PC-3 (cell line): ENCODE measurements at regions of chr7 and their contacts with region 1.

Region 1: DNA sequence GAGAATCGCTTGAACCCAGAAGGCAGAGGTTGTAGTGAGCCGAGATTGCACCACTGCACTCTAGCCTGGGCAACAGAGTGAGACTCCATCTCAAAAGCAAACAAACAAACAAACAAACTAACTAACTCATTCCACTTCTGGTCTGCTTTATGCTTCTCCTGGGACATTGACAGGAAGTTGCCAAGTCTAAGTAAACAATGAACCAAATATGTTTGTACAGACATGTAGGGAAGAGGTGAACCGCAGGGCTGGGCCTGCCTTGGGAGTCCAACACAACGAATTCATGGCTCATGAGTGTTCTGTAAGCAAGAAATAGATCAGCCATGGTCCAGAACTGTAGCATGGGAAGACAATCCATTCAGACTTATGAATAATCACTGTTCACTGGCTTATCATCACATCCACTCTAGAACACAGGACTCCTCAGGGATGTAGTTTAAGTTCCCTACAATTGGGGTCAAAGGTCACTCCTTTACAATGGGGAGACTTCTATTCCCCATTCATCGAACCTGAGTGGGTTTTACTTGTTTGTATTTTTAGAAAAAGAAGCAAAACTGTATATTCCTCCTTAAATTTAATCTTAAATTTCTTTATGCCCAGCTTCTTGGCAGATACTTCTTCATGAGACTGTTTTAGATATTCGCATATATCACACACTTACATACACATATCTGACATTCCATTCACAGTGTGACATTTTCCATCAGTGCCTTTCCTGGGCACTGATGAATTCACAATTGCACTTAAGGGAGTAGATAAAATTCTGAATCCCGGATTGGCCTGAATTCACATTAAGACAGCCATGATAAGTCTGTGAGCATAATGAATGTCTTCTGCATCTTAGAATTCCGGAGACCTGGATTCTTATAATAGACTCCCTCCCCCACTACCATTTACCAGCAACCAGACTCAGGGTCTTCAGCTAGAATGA is 159.1 kb upstream of the EEPD1 start:
- DNase-seq: peak; percentile 94
- ATAC-seq: peak; percentile 75
- H3K4me3 ChIP-seq: no peak overlapping the region
- H3K27ac ChIP-seq: peak overlapping the region; percentile 87
- H3K4me1 ChIP-seq: peaks cover 29% of the 10 kb centered on the region
- H3K27me3 ChIP-seq: no peaks in the 10 kb centered on the region
- CTCF ChIP-seq: no peak

Region 2: GRCh38 chr7:36037121-36037662 is 43.3 kb after region 1 on chr7:
- CTCF ChIA-PET with region 1: no interaction called
- POLR2A ChIA-PET with region 1: no interaction called
- intact Hi-C with region 1: loop called (anchors 1 kb)
- DNase-seq: peak; percentile 99
- ATAC-seq: peak; percentile 68
- H3K4me3 ChIP-seq: peak overlapping the region; percentile 39
- H3K27ac ChIP-seq: peak overlapping the region; percentile 100
- H3K4me1 ChIP-seq: peaks cover 69% of the 10 kb centered on the region
- H3K27me3 ChIP-seq: no peaks in the 10 kb centered on the region
- CTCF ChIP-seq: no peak

Region 3: DNA sequence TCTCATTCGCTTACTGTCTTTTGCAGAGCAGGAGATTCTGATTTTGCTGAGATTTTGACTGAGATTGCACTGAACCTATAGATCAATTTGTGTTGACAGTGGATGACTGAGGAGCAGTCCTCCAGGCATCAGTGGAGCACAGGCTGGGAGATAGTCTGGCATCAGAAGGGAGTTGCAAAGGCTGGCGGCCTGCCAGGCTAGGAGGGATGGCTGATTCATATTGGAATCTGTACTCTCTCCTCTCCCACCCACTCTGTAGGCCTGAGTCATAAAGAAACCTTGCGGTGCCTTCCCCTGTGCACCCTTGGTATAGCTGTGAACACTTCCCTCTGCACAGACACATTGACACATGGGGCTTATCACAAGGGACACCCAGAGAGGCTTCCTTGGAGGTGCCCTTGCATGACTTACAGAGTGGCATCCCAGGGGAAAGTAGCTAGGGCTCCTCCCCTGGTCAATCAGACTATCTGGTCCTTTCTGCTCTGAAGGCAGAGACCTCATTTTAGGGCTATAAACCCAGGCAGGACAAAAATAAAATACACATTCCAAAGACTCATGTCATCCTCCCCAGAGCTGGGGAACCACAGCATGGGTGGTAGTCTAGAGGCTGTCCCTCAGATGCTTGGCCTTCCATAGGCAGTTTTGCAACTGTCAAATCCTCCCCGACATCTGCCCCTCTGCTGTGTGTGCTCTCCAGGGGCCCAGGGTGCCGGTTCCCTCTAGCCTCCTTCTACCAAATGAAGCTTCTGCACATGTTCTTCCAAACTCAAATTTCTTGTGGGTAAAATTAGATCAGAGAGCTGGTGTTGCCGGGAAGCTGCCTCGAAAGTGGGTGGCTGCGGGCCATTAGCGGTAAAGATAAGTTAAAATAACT is 121.7 kb after region 1 on chr7:
- CTCF ChIA-PET with region 1: no interaction called
- POLR2A ChIA-PET with region 1: no interaction called
- intact Hi-C with region 1: loop called (anchors 1 kb)
- DNase-seq: peak; percentile 97
- ATAC-seq: peak; percentile 89
- H3K4me3 ChIP-seq: peak overlapping the region; percentile 17; the same call in 1 of the 2 replicates
- H3K27ac ChIP-seq: peak overlapping the region; percentile 95
- H3K4me1 ChIP-seq: peaks cover 51% of the 10 kb centered on the region
- H3K27me3 ChIP-seq: no peaks in the 10 kb centered on the region
- CTCF ChIP-seq: no peak